ENCODE measurements at regions of chr17 and their contacts with region 1.

Region 1: GRCh38 chr17:30278032-30278431 is 13.7 kb downstream of the BLMH start:
- DNase-seq: peak; percentile 43
- H3K4me3 ChIP-seq: no peak overlapping the region
- H3K27ac ChIP-seq: no peak overlapping the region
- H3K4me1 ChIP-seq: no peaks in the 10 kb centered on the region
- CTCF ChIP-seq: peak; percentile 71

Region 2: DNA sequence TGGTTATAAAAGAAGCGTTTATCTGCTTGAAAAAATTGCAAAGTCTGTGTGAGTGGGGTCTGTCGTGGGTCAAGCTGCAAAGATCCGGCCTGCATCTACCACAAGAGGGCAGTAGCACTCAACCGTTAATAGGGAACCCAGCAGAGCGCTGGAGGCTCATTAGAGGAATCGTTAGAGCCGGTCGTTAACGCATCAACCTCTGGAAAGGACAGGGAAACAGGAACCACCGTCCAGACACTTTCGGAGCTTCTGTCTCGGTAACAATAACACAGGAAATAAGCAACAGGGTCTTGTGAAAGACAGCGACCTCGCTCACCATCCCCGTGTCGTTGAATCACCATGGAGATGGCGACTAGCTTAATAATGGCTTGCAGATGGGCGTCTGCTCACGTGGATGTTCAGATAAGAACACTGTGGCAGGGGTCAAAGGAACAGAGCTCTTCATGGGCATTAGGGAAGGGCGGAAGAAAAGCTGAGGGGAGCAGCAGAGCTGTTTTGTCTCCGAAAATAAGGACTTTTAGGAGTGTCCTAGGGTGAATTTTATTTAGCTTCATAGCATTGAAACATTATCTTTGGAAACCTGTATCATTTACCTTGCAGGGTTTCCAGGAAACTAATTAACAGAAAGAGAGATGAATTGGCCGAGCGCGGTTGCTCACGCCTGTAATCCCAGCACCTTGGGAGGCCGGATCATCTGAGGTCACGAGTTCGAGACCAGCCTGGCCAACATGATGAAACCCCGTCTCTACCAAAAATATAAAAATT is 173.3 kb before region 1 on chr17:
- CTCF ChIA-PET with region 1: no interaction called
- POLR2A ChIA-PET with region 1: no interaction called
- intact Hi-C with region 1: loop called (anchors 5 kb)
- DNase-seq: peak; percentile 86
- H3K4me3 ChIP-seq: peak overlapping the region; percentile 57
- H3K27ac ChIP-seq: no peak overlapping the region
- H3K4me1 ChIP-seq: no peaks in the 10 kb centered on the region
- CTCF ChIP-seq: peak; percentile 99

Region 3: DNA sequence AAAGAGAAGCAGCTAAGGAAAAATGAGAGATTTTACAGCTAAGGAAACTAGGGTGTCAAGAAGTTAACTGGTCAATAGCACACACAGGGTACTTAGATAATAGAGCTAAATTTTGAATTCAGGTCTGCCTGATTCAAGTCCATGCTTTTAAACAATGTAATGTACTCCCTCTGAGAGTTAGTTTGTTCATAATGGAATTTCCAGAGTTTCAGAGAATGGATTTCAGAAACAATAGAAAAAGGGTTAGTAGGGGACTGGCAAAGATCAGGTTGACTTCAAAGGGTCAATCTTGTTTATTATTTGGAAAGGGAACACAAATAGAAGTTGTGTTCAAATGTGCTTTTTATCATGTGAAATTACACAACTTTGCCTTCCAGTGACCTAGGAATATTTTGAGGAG is 143.5 kb before region 1 on chr17:
- CTCF ChIA-PET with region 1: no interaction called
- POLR2A ChIA-PET with region 1: no interaction called
- intact Hi-C with region 1: loop called (anchors 5 kb)
- DNase-seq: no peak
- H3K4me3 ChIP-seq: no peak overlapping the region
- H3K27ac ChIP-seq: no peak overlapping the region
- H3K4me1 ChIP-seq: no peaks in the 10 kb centered on the region
- CTCF ChIP-seq: no peak

Region 4: GRCh38 chr17:30323895-30324319 is 45.9 kb after region 1 on chr17:
- CTCF ChIA-PET with region 1: no interaction called
- POLR2A ChIA-PET with region 1: interaction called, 10 read pairs
- intact Hi-C with region 1: no loop called
- DNase-seq: peak; percentile 55
- H3K4me3 ChIP-seq: peak overlapping the region; percentile 63
- H3K27ac ChIP-seq: peak overlapping the region; percentile 96
- H3K4me1 ChIP-seq: peaks cover 64% of the 10 kb centered on the region
- CTCF ChIP-seq: no peak

Measured in OCI-LY7 (cell line).